SK-N-SH (cell line): ENCODE measurements at regions of chr5 and their contacts with region 1.

Region 1: DNA sequence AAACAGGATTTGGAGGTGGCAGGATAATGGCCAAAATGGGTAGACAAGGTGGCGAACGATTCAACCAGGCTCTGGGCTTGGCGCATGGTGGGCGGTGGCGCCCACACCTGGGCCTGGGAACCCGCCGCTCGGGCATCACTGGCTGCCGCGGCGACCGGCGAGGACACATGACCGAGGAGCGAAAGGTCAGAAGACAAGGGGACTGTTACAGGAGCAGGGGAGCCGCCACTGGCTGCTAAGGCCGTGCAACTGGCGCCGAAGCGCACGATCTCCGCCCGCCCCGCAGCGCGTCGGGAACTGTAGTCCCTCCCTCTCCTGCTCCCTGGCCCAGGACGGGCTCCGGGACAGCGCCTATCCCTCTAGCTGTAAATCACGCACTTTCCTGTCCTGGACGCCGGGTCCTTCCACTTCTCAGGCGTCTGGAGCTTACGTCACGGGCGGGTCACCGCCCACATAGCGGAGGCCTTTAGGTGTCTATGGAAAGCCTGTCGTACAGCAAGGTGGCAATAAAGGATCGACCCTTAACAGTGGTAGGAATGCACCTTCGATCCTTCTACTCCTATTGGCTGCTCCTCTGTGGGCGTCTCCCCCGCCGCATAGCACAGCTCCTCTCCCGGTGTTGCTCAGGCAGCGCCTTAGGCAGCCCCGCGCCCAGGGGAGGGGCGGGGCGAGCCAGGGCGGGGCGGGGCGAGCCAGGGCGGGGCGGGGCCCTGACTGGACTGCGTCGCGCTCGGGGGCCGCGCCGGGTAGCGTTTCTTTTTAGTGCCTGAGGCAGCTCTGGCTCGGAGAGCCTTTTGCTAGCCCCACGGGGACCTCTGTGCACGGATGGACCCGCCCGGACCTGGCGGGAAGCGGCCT is at the start of gene ICE1:
- DNase-seq: peak; percentile 97
- H3K4me3 ChIP-seq: peak within 1 kb of the TSS; percentile 94 to 99
- H3K27ac ChIP-seq: peak within 1 kb of the TSS; percentile 95 to 98
- H3K4me1 ChIP-seq: peaks cover 18 to 23% of the 10 kb centered on the region in 2 experiments
- H3K27me3 ChIP-seq: no peaks in the 10 kb centered on the region
- CTCF ChIP-seq: no peak
- EP300 ChIP-seq: no peak; a peak in 1 of 4 replicates
- RAD21 ChIP-seq: no peak
- polyA plus RNA-seq, gene ICE1: 9.4 and 10.7 TPM in 2 replicates

Region 2: GRCh38 chr5:4868109-4868735 is 554.0 kb before region 1 on chr5:
- CTCF ChIA-PET with region 1: interaction called, 14 read pairs
- POLR2A ChIA-PET with region 1: no interaction called
- DNase-seq: peak; percentile 85
- H3K4me3 ChIP-seq: peak overlapping the region in 1 of 2 experiments; percentile 18; a peak in 1 of 4 replicates
- H3K27ac ChIP-seq: no peak overlapping the region
- H3K4me1 ChIP-seq: no peaks in the 10 kb centered on the region
- H3K27me3 ChIP-seq: peaks cover 11% of the 10 kb centered on the region; the same call in 1 of the 2 replicates
- CTCF ChIP-seq: peak; percentile 90
- EP300 ChIP-seq: no peak
- RAD21 ChIP-seq: peak; percentile 66

Region 3: GRCh38 chr5:5116956-5117355 is 305.2 kb before region 1 on chr5:
- CTCF ChIA-PET with region 1: no interaction called
- POLR2A ChIA-PET with region 1: no interaction called
- DNase-seq: no peak
- H3K4me3 ChIP-seq: no peak overlapping the region
- H3K27ac ChIP-seq: no peak overlapping the region
- H3K4me1 ChIP-seq: no peaks in the 10 kb centered on the region; a peak in 1 of 4 replicates
- H3K27me3 ChIP-seq: no peaks in the 10 kb centered on the region
- CTCF ChIP-seq: no peak
- EP300 ChIP-seq: no peak
- RAD21 ChIP-seq: no peak

Region 4: GRCh38 chr5:5141625-5142532 is 280.3 kb before region 1 on chr5:
- CTCF ChIA-PET with region 1: interaction called, 69 read pairs
- POLR2A ChIA-PET with region 1: no interaction called
- DNase-seq: peak; percentile 53
- H3K4me3 ChIP-seq: peak overlapping the region in 1 of 2 experiments; percentile 28; a peak in 1 of 4 replicates
- H3K27ac ChIP-seq: no peak overlapping the region
- H3K4me1 ChIP-seq: peaks cover 0 to 3% of the 10 kb centered on the region in 2 experiments; a peak in 1 of 4 replicates
- H3K27me3 ChIP-seq: peaks cover 26% of the 10 kb centered on the region
- CTCF ChIP-seq: peak; percentile 84
- EP300 ChIP-seq: no peak
- RAD21 ChIP-seq: peak; percentile 85

Region 5: DNA sequence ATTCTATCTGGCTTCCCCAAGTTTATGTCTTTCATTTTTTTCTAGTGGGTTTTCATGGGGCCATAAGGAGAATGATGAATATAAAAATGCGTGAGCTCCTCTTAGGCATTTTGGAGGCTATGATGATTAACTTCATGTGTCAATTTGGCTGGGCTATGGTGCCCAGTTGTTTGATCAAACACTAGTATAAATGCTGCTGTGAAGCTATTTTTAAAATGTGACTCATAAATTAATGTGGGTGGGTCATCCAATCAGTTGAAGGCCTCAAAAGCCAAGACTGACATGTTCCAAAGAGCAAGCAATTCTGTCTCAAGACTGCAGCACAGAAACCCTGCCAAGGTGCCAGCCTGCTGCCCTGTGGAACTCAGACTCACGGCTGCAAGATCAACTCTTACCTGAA is 24.1 kb before region 1 on chr5:
- CTCF ChIA-PET with region 1: interaction called, 33 read pairs
- POLR2A ChIA-PET with region 1: no interaction called
- DNase-seq: no peak
- H3K4me3 ChIP-seq: no peak overlapping the region
- H3K27ac ChIP-seq: no peak overlapping the region
- H3K4me1 ChIP-seq: no peaks in the 10 kb centered on the region
- H3K27me3 ChIP-seq: no peaks in the 10 kb centered on the region
- CTCF ChIP-seq: no peak
- EP300 ChIP-seq: no peak
- RAD21 ChIP-seq: no peak

Region 6: DNA sequence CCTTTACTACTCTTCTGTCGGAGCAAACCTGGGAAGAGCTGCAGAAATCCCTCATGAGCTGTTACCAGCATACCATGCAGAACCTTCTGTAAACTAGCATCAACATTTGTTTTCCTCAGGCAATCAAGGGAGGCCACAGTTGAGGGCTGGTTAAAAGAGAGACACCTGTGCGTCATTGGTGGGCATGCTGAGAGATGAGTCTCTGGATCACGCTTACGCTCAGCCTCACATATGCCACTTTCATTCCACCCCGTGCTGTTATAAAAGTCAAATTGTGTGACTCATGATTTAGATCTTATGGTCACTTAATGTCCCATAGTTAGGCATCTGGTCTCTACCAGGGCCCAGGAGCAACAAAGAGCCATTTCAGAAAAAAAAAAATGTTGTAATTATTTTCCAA is 17.8 kb before region 1 on chr5:
- CTCF ChIA-PET with region 1: interaction called, 31 read pairs
- POLR2A ChIA-PET with region 1: interaction called, 3 read pairs
- DNase-seq: no peak
- H3K4me3 ChIP-seq: no peak overlapping the region
- H3K27ac ChIP-seq: no peak overlapping the region
- H3K4me1 ChIP-seq: no peaks in the 10 kb centered on the region; a peak in 1 of 4 replicates
- H3K27me3 ChIP-seq: no peaks in the 10 kb centered on the region
- CTCF ChIP-seq: no peak
- EP300 ChIP-seq: no peak
- RAD21 ChIP-seq: no peak